Mammary epithelial cell (primary cell): ENCODE measurements at regions of chr4 and their contacts with region 1.

Region 1: DNA sequence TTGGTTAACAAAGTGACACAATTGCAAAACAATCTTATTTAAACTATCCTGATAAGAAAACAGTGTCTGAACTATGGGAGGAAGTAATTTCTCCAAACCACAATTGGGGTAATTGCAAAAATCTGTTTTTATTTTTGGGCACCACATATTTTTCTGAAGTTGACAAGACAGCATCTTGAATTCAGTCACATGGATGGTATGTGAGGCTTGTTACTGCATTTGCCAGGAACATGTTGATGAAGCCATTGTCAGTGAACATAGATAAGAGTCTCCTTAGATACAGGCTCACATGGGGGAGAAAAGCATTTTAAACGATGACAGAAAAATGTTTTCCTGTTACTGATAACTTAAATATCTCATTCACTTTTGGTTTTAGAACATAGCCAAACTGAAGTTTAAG is 5.5 kb upstream of the USP53 start:
- DNase-seq: no peak
- H3K4me3 ChIP-seq: no peak overlapping the region
- H3K27ac ChIP-seq: no peak overlapping the region
- H3K4me1 ChIP-seq: peaks cover 29% of the 10 kb centered on the region
- H3K27me3 ChIP-seq: no peaks in the 10 kb centered on the region
- CTCF ChIP-seq: no peak

Region 2: DNA sequence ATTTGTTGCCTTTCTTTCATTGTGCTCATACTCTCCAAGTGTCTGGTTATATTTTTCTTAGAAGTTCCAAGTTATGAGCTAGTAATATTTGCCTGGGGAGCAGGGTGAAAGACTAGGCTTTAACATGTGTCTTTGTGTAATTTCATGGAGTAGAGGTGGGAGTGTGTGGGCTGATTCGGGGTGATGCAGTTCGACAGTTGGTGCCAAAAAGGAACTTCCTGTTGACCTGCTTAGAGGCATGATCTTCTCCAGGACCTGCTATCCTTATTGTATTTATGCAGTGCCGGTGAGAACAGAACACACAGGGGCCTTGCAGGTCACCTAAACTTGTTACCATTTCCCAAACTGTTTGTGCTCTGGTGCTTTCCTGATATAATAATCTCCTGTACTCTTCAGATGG is 26.7 kb after region 1 on chr4:
- CTCF ChIA-PET with region 1: interaction called, 12 read pairs
- dilution Hi-C with region 1: no loop called
- in situ Hi-C with region 1: no loop called
- intact Hi-C with region 1: no loop called
- DNase-seq: no peak
- H3K4me3 ChIP-seq: no peak overlapping the region
- H3K27ac ChIP-seq: no peak overlapping the region
- H3K4me1 ChIP-seq: peaks cover 10% of the 10 kb centered on the region
- H3K27me3 ChIP-seq: no peaks in the 10 kb centered on the region
- CTCF ChIP-seq: no peak